ENCODE measurements at regions of chr21 and their contacts with region 1.

Region 1: DNA sequence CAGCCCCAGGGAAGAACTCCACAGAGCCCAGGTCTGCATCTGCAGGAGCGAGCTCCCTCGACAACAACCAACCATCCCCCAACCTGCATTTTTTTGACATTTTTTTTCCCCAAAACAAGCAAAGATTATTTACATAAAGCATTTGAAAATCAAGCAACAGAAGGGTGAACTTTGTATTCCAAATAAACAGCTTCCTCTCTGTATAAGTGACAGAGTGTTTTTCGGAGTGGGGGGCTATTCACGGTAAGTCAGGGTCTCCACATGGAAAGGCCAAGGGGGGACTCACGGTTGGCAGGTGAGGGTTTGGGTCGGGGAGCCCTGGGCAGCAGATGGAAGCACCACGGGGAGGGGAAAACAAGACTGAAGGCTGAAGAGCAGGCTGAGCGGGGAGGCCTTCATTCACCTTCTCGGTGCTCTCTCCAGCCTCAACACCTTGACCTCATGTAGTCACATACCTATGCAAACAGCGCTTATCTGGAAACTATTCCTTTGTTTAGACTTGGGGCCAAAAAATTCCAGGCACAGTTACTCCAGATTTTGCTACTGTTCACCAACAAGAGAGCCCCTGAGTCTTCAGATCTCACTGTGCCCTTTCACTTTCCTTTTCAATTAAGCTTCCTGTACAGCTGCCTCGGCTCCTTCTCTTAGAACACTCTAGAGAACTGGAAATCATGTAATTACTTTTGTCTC is 27.6 kb downstream of the C2CD2 start:
- DNase-seq: no peak
- H3K4me3 ChIP-seq: peak overlapping the region; percentile 13
- CTCF ChIP-seq: no peak

Region 2: GRCh38 chr21:41612674-41613532 is 313.4 kb before region 1 on chr21:
- in situ Hi-C with region 1: loop called (anchors 25 kb)
- DNase-seq: peak; percentile 99
- H3K4me3 ChIP-seq: no peak overlapping the region
- CTCF ChIP-seq: peak; percentile 66

Region 3: DNA sequence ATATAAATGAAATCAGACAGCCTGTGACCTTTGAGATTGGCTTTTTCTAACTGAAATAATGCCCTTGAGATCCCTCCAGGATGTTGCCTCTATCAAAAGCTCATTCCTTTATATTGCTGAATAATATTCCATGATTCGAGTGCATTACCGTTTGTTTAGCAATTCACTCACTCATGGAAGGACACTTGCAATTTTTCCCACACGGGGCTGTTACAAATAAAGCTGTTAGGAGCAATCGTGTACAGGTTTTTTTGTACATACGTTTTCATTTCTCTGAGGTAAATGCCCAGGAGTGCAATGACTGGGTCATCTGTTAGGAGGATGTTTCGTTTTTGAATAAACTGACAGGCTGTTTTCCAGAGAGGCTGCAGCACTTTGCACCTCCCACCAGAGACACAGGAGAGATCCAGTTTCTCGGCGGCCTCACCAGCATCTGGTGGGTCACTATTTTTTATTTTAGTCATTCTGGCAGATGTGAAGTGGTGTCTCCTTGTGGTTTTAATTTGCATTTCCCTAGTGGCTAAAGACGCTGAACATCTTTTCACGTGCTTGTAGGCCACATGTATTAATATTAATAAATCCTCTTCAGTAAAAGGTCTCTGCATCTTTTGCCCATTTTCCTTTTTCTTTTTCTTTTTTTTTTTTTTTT is 58.1 kb before region 1 on chr21:
- in situ Hi-C with region 1: loop called (anchors 5 kb)
- DNase-seq: no peak
- H3K4me3 ChIP-seq: no peak overlapping the region
- CTCF ChIP-seq: no peak

Region 4: DNA sequence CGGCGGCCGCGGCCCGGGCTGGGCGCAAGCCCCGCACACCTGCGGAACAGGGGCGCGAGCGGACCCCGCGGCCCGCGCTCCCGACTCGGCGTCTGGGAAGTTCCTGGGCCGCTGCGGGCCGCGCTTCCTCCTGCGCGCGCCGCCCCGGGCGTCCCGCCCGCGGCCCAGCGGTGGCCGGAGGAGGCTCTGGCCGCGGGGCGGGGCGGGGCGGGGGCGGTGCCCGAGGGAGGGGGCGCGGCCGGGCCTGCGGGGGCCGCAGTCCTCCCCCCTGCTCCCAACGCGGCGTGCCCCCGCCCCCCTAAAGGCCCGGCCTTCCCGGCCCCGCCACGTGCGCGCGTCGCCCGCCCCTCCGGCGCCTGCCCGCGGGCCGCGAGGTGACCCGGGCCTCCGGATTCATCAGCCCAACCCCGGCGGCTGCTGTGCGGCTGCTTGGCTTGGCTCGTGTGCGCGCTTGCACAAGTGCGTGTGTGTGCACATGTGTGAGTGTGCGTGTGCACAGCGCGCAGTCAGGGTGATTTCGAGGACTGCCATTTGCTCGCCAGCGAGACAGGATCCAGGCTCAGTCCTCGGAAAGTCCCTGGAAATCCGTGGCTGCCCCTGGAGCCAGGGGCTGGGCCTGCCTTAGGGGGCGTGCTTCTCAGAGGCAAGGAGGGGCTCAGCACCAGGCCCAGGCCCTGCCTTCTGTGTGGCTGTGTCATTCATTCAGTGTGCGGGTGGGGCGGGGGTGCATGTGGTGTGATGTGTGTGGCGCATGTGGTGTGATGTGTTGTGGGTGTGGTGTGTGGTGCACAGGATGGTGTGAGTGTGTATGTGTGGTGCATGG is 27.8 kb after region 1 on chr21 and contains the start of gene C2CD2:
- in situ Hi-C with region 1: no loop called
- DNase-seq: no peak
- H3K4me3 ChIP-seq: peak within 1 kb of the TSS; percentile 62
- CTCF ChIP-seq: no peak

Region 5: DNA sequence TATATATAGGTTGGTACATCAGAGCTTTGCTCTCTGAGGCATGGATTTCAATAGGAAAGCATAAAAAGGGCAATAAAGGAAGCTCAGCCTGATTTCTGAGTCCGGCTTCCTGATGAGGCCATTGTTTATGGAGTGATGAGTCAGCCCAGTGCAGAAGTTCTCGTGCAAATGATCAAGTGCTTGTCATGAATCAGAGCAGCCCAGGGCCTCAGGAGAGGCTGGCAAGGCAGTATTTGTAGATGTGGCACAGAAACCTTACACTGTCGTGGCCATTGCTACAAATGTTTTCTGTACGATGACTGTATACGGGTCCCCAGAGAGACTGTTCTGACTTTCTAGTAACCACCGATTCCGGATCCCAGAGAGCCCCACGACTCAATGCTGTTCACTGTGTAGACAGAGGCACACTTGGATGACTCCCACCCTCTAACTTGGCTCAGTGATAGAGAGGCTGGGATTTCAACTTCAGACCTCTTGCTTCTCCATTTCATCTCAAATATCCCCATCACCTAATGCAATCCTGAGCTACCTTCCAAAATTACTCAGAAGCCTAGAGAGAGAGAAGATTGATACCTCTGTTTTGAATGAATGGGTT is 171.7 kb after region 1 on chr21:
- in situ Hi-C with region 1: loop called (anchors 25 kb)
- DNase-seq: peak; percentile 85
- H3K4me3 ChIP-seq: no peak overlapping the region
- CTCF ChIP-seq: no peak

Measured in astrocyte of the cerebellum (primary cell).